ENCODE measurements at regions of chr19 and their contacts with region 1.

Region 1: GRCh38 chr19:35066691-35067563 is 25.4 kb downstream of the HPN start:
- DNase-seq: peak; percentile 83 to 94 (median 88)
- ATAC-seq: peak; percentile 95
- H3K4me3 ChIP-seq: no peak overlapping the region
- H3K4me3 Mint-ChIP-seq: no peak overlapping the region
- H3K27ac ChIP-seq: no peak overlapping the region
- H3K27ac Mint-ChIP-seq: no peak overlapping the region
- H3K4me1 ChIP-seq: peaks cover 8% of the 10 kb centered on the region
- H3K4me1 Mint-ChIP-seq: peaks cover 8% of the 10 kb centered on the region
- H3K27me3 ChIP-seq: peaks cover 0 to 5% of the 10 kb centered on the region in 2 experiments
- H3K27me3 Mint-ChIP-seq: no peaks in the 10 kb centered on the region
- CTCF ChIP-seq: peak; percentile 87

Region 2: GRCh38 chr19:35107546-35107945 is 40.6 kb after region 1 on chr19:
- CTCF ChIA-PET with region 1: no interaction called
- POLR2A ChIA-PET with region 1: no interaction called
- intact Hi-C with region 1: no loop called
- DNase-seq: no peak
- ATAC-seq: no peak
- H3K4me3 ChIP-seq: no peak overlapping the region
- H3K4me3 Mint-ChIP-seq: no peak overlapping the region
- H3K27ac ChIP-seq: no peak overlapping the region
- H3K27ac Mint-ChIP-seq: no peak overlapping the region
- H3K4me1 ChIP-seq: no peaks in the 10 kb centered on the region
- H3K4me1 Mint-ChIP-seq: no peaks in the 10 kb centered on the region
- H3K27me3 ChIP-seq: peaks cover 0 to 2% of the 10 kb centered on the region in 2 experiments
- H3K27me3 Mint-ChIP-seq: no peaks in the 10 kb centered on the region
- CTCF ChIP-seq: no peak

Region 3: GRCh38 chr19:35135389-35135909 is 68.5 kb after region 1 on chr19:
- CTCF ChIA-PET with region 1: interaction called, 10 read pairs
- POLR2A ChIA-PET with region 1: no interaction called
- intact Hi-C with region 1: no loop called
- DNase-seq: peak in 13 of 14 experiments; percentile 42 to 81 (median 58)
- ATAC-seq: peak; percentile 92
- H3K4me3 ChIP-seq: no peak overlapping the region
- H3K4me3 Mint-ChIP-seq: no peak overlapping the region
- H3K27ac ChIP-seq: no peak overlapping the region
- H3K27ac Mint-ChIP-seq: peak overlapping the region; percentile 13
- H3K4me1 ChIP-seq: peaks cover 13% of the 10 kb centered on the region
- H3K4me1 Mint-ChIP-seq: peaks cover 8% of the 10 kb centered on the region
- H3K27me3 ChIP-seq: no peaks in the 10 kb centered on the region
- H3K27me3 Mint-ChIP-seq: no peaks in the 10 kb centered on the region
- CTCF ChIP-seq: peak; percentile 58

Region 4: GRCh38 chr19:35468637-35469036 is 401.7 kb after region 1 on chr19:
- CTCF ChIA-PET with region 1: no interaction called
- POLR2A ChIA-PET with region 1: no interaction called
- intact Hi-C with region 1: loop called (anchors 2 to 5 kb)
- DNase-seq: peak; percentile 42 to 85 (median 58)
- ATAC-seq: peak; percentile 100
- H3K4me3 ChIP-seq: no peak overlapping the region
- H3K4me3 Mint-ChIP-seq: no peak overlapping the region
- H3K27ac ChIP-seq: no peak overlapping the region
- H3K27ac Mint-ChIP-seq: no peak overlapping the region
- H3K4me1 ChIP-seq: peaks cover 12% of the 10 kb centered on the region
- H3K4me1 Mint-ChIP-seq: peaks cover 1% of the 10 kb centered on the region
- H3K27me3 ChIP-seq: no peaks in the 10 kb centered on the region
- H3K27me3 Mint-ChIP-seq: no peaks in the 10 kb centered on the region
- CTCF ChIP-seq: peak; percentile 55

Measured in CD4-positive, alpha-beta T cell (primary cell).